ENCODE measurements at regions of chr10 and their contacts with region 1.

Region 1: GRCh38 chr10:5629303-5630111 is 36.9 kb downstream of the ASB13 start:
- DNase-seq: peak; percentile 85
- ATAC-seq: peak; percentile 96
- H3K4me3 ChIP-seq: no peak overlapping the region
- H3K4me3 Mint-ChIP-seq: no peak overlapping the region
- H3K27ac ChIP-seq: no peak overlapping the region
- H3K27ac Mint-ChIP-seq: no peak overlapping the region
- H3K4me1 ChIP-seq: peaks cover 7 to 13% of the 10 kb centered on the region in 2 donors
- H3K4me1 Mint-ChIP-seq: peaks cover 10% of the 10 kb centered on the region
- H3K27me3 ChIP-seq: peaks cover 0 to 11% (median 5%) of the 10 kb centered on the region in 4 experiments
- H3K27me3 Mint-ChIP-seq: peaks cover 5% of the 10 kb centered on the region
- CTCF ChIP-seq: peak; percentile 97

Region 2: DNA sequence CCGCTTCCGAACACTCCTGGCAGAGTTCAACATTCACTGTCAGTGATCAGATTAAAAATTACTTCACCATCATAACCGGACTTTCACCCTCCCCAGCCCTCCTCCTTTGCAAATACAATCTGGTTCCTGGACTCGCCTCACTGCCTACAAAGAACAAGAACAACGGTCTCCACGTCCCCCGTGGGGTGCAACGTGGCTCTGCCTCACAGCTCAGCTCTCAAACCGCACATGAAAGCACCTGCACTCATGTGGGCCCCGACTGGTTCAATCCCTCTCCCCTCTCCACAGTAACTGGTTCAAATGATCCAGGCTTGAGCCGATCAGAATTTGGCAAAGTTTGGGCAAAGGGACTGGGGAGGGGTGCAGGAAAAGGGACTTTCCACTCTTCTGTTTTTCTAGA is 15.9 kb after region 1 on chr10:
- CTCF ChIA-PET with region 1: interaction called, 18 read pairs
- POLR2A ChIA-PET with region 1: no interaction called
- intact Hi-C with region 1: no loop called
- DNase-seq: peak; percentile 77
- ATAC-seq: peak; percentile 87
- H3K4me3 ChIP-seq: peak overlapping the region in 2 of 5 experiments; percentile 12 to 50
- H3K4me3 Mint-ChIP-seq: peak overlapping the region; percentile 58
- H3K27ac ChIP-seq: peak overlapping the region in 1 of 2 donors; percentile 74
- H3K27ac Mint-ChIP-seq: peak overlapping the region; percentile 64
- H3K4me1 ChIP-seq: peaks cover 21 to 23% of the 10 kb centered on the region in 2 donors
- H3K4me1 Mint-ChIP-seq: peaks cover 28% of the 10 kb centered on the region
- H3K27me3 ChIP-seq: no peaks in the 10 kb centered on the region
- H3K27me3 Mint-ChIP-seq: no peaks in the 10 kb centered on the region
- CTCF ChIP-seq: no peak

Region 3: GRCh38 chr10:5723692-5724091 is 94.2 kb after region 1 on chr10:
- CTCF ChIA-PET with region 1: interaction called, 3 read pairs
- POLR2A ChIA-PET with region 1: no interaction called
- intact Hi-C with region 1: loop called (anchors 10 kb)
- DNase-seq: no peak
- ATAC-seq: no peak
- H3K4me3 ChIP-seq: no peak overlapping the region
- H3K4me3 Mint-ChIP-seq: no peak overlapping the region
- H3K27ac ChIP-seq: no peak overlapping the region
- H3K27ac Mint-ChIP-seq: no peak overlapping the region
- H3K4me1 ChIP-seq: no peaks in the 10 kb centered on the region
- H3K4me1 Mint-ChIP-seq: no peaks in the 10 kb centered on the region
- H3K27me3 ChIP-seq: no peaks in the 10 kb centered on the region
- H3K27me3 Mint-ChIP-seq: no peaks in the 10 kb centered on the region
- CTCF ChIP-seq: no peak

Region 4: GRCh38 chr10:5889624-5890451 is 260.3 kb after region 1 on chr10 and contains the starts of genes ANKRD16 and FBH1:
- CTCF ChIA-PET with region 1: no interaction called
- POLR2A ChIA-PET with region 1: no interaction called
- intact Hi-C with region 1: loop called (anchors 5 kb)
- DNase-seq: peak; percentile 99
- ATAC-seq: peak; percentile 84
- H3K4me3 ChIP-seq: peak within 1 kb of the TSS; percentile 51 to 88 (median 77)
- H3K4me3 Mint-ChIP-seq: peak within 1 kb of the TSS; percentile 94
- H3K27ac ChIP-seq: peak within 1 kb of the TSS; percentile 48 to 77
- H3K27ac Mint-ChIP-seq: peak within 1 kb of the TSS; percentile 88
- H3K4me1 ChIP-seq: peaks cover 28 to 33% of the 10 kb centered on the region in 2 donors
- H3K4me1 Mint-ChIP-seq: peaks cover 58% of the 10 kb centered on the region
- H3K27me3 ChIP-seq: no peaks in the 10 kb centered on the region
- H3K27me3 Mint-ChIP-seq: no peaks in the 10 kb centered on the region
- CTCF ChIP-seq: no peak
- total RNA-seq, gene ANKRD16: 12.6 and 13.1 TPM in 2 replicates
- total RNA-seq, gene FBH1: 129 and 138 TPM in 2 replicates